Activated CD4-positive, alpha-beta memory T cell treated with anti-CD3 and anti-CD28 coated beads for 36 hours (primary cell): ENCODE measurements at regions of chr11 and their contacts with region 1.

Region 1: GRCh38 chr11:126480410-126481302 is 125.2 kb downstream of the ST3GAL4 start:
- DNase-seq: peak; percentile 80
- H3K4me3 Mint-ChIP-seq: peak overlapping the region; percentile 22
- H3K27ac Mint-ChIP-seq: peak overlapping the region; percentile 31
- H3K4me1 Mint-ChIP-seq: peaks cover 17% of the 10 kb centered on the region
- H3K27me3 Mint-ChIP-seq: peaks cover 1% of the 10 kb centered on the region

Region 2: GRCh38 chr11:125923012-125923579 is 557.6 kb before region 1 on chr11:
- CTCF ChIA-PET with region 1: interaction called, 5 read pairs
- POLR2A ChIA-PET with region 1: no interaction called
- intact Hi-C with region 1: loop called (anchors 2 kb)
- DNase-seq: peak; percentile 69
- H3K4me3 Mint-ChIP-seq: no peak overlapping the region
- H3K27ac Mint-ChIP-seq: no peak overlapping the region
- H3K4me1 Mint-ChIP-seq: no peaks in the 10 kb centered on the region
- H3K27me3 Mint-ChIP-seq: peaks cover 18% of the 10 kb centered on the region

Region 3: GRCh38 chr11:126310228-126310991 is 170.2 kb before region 1 on chr11:
- CTCF ChIA-PET with region 1: interaction called, 91 read pairs
- POLR2A ChIA-PET with region 1: no interaction called
- intact Hi-C with region 1: loop called (anchors 1 kb)
- DNase-seq: peak; percentile 70
- H3K4me3 Mint-ChIP-seq: no peak overlapping the region
- H3K27ac Mint-ChIP-seq: no peak overlapping the region
- H3K4me1 Mint-ChIP-seq: peaks cover 22% of the 10 kb centered on the region
- H3K27me3 Mint-ChIP-seq: no peaks in the 10 kb centered on the region

Region 4: GRCh38 chr11:126440792-126441514 is 39.7 kb before region 1 on chr11:
- CTCF ChIA-PET with region 1: interaction called, 146 read pairs
- POLR2A ChIA-PET with region 1: no interaction called
- intact Hi-C with region 1: loop called (anchors 1 kb)
- DNase-seq: peak; percentile 81
- H3K4me3 Mint-ChIP-seq: no peak overlapping the region
- H3K27ac Mint-ChIP-seq: no peak overlapping the region
- H3K4me1 Mint-ChIP-seq: no peaks in the 10 kb centered on the region
- H3K27me3 Mint-ChIP-seq: peaks cover 12% of the 10 kb centered on the region

Region 5: GRCh38 chr11:126465573-126466188 is 15.0 kb before region 1 on chr11:
- CTCF ChIA-PET with region 1: interaction called, 55 read pairs
- POLR2A ChIA-PET with region 1: no interaction called
- intact Hi-C with region 1: loop called (anchors 2 kb)
- DNase-seq: peak; percentile 58
- H3K4me3 Mint-ChIP-seq: no peak overlapping the region
- H3K27ac Mint-ChIP-seq: peak overlapping the region; percentile 62
- H3K4me1 Mint-ChIP-seq: peaks cover 16% of the 10 kb centered on the region
- H3K27me3 Mint-ChIP-seq: peaks cover 4% of the 10 kb centered on the region